Activated naive CD8-positive, alpha-beta T cell treated with anti-CD3 and anti-CD28 coated beads, Interleukin-2, amount 10 ng/mL, durations not matched to agents 7 days and 5 days (primary cell): ENCODE measurements at regions of chr22 and their contacts with region 1.

Region 1: DNA sequence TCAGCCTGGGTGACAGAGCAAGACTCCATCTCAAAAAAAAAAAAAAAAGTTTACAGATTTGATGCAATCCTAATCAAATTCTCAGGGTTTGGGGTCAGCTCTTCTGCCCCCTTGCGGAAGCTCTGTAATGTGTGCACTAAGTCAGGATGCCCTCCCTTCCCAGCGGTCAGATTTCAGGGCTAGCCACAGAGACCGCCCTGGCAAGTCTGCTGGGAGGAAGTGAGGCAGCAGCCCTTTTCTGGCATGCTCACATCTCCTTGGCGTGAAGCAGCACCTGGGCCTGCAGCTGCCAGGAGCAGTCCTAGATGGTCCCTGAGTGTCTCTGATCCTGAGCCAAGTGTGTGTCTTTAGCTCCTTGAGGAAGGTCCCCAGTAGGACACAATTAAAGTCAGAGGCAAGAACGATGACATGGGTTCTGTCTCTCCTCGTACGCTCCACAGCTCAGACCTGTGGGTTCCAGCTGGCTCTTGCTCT is 10.9 kb upstream of the APOBEC3C start:
- DNase-seq: peak; percentile 80
- ATAC-seq: peak; percentile 95
- H3K4me3 Mint-ChIP-seq: no peak overlapping the region
- H3K27ac Mint-ChIP-seq: no peak overlapping the region
- H3K4me1 Mint-ChIP-seq: peaks cover 10% of the 10 kb centered on the region
- H3K27me3 Mint-ChIP-seq: peaks cover 12% of the 10 kb centered on the region

Region 2: GRCh38 chr22:38872172-38872830 is 130.9 kb before region 1 on chr22 and contains the start of gene CBX6:
- POLR2A ChIA-PET with region 1: interaction called, 32 read pairs
- DNase-seq: peak; percentile 99
- ATAC-seq: peak; percentile 76
- H3K4me3 Mint-ChIP-seq: peak within 1 kb of the TSS; percentile 90
- H3K27ac Mint-ChIP-seq: peak within 1 kb of the TSS; percentile 88
- H3K4me1 Mint-ChIP-seq: peaks cover 34% of the 10 kb centered on the region
- H3K27me3 Mint-ChIP-seq: peaks cover 20% of the 10 kb centered on the region
- total RNA-seq, gene CBX6: 66.0 to 66.4 TPM